CD4-positive, alpha-beta T cell (primary cell): ENCODE measurements at regions of chr18 and their contacts with region 1.

Region 1: DNA sequence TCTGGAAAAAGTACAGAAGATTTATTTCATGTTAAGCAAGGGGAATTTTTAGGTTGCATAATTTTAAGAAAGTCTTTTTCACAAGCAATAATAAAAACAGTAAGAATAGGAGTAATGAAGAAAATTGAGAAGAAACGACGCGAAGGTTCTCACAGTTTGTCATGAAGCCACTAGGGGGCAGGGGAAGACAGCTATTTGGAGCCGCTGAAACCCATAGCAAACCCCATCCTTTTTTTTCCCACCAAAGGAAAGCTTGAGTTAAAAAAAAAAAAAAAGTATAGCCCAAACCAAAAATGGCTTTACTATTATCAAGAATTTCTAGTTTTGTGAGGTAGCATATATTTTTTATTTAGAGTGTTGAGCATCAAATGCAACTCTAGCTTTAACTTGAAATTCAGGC is 300.9 kb downstream of the PHLPP1 start:
- DNase-seq: peak in 13 of 14 experiments; percentile 10 to 81 (median 33)
- ATAC-seq: peak; percentile 71
- H3K4me3 ChIP-seq: no peak overlapping the region
- H3K4me3 Mint-ChIP-seq: no peak overlapping the region
- H3K27ac ChIP-seq: no peak overlapping the region
- H3K27ac Mint-ChIP-seq: no peak overlapping the region
- H3K4me1 ChIP-seq: no peaks in the 10 kb centered on the region
- H3K4me1 Mint-ChIP-seq: no peaks in the 10 kb centered on the region
- H3K27me3 ChIP-seq: no peaks in the 10 kb centered on the region
- H3K27me3 Mint-ChIP-seq: peaks cover 9% of the 10 kb centered on the region
- CTCF ChIP-seq: peak; percentile 81

Region 2: GRCh38 chr18:63040788-63041410 is 24.6 kb after region 1 on chr18:
- CTCF ChIA-PET with region 1: no interaction called
- POLR2A ChIA-PET with region 1: no interaction called
- intact Hi-C with region 1: no loop called
- DNase-seq: peak in 2 of 14 experiments; percentile 51 to 59
- ATAC-seq: no peak
- H3K4me3 ChIP-seq: no peak overlapping the region
- H3K4me3 Mint-ChIP-seq: no peak overlapping the region
- H3K27ac ChIP-seq: no peak overlapping the region
- H3K27ac Mint-ChIP-seq: no peak overlapping the region
- H3K4me1 ChIP-seq: peaks cover 9% of the 10 kb centered on the region
- H3K4me1 Mint-ChIP-seq: peaks cover 9% of the 10 kb centered on the region
- H3K27me3 ChIP-seq: peaks cover 0 to 6% of the 10 kb centered on the region in 2 experiments
- H3K27me3 Mint-ChIP-seq: peaks cover 6% of the 10 kb centered on the region
- CTCF ChIP-seq: no peak

Region 3: GRCh38 chr18:63339920-63340484 is 323.7 kb after region 1 on chr18:
- CTCF ChIA-PET with region 1: interaction called, 8 read pairs
- POLR2A ChIA-PET with region 1: interaction called, 3 read pairs
- intact Hi-C with region 1: loop called (anchors 1 to 5 kb)
- DNase-seq: peak in 13 of 14 experiments; percentile 9 to 75 (median 32)
- ATAC-seq: peak; percentile 51
- H3K4me3 ChIP-seq: no peak overlapping the region
- H3K4me3 Mint-ChIP-seq: no peak overlapping the region
- H3K27ac ChIP-seq: no peak overlapping the region
- H3K27ac Mint-ChIP-seq: no peak overlapping the region
- H3K4me1 ChIP-seq: no peaks in the 10 kb centered on the region
- H3K4me1 Mint-ChIP-seq: no peaks in the 10 kb centered on the region
- H3K27me3 ChIP-seq: no peaks in the 10 kb centered on the region
- H3K27me3 Mint-ChIP-seq: no peaks in the 10 kb centered on the region
- CTCF ChIP-seq: peak; percentile 65

Region 4: DNA sequence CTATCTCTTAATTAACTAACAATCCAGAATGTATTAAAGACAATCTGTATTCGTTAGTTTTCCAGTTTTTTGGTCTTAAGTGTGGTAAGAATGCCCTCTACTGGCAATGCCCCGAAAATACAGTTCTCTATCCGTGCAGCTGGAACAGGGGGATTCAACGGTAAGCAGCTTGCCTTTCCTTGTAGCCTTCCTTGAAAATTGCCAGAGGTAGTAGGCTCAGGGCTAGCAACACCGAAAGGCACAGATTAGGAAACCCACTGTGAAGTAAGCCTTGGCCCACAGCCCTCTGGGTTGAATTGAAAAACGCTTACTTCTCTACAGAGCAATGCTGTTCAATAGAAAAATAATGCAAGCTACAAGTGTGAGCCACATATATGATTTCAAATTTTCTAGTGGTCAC is 423.1 kb after region 1 on chr18:
- CTCF ChIA-PET with region 1: interaction called, 28 read pairs
- POLR2A ChIA-PET with region 1: interaction called, 4 read pairs
- intact Hi-C with region 1: loop called (anchors 1 kb)
- DNase-seq: peak; percentile 7 to 79 (median 32)
- ATAC-seq: peak; percentile 79
- H3K4me3 ChIP-seq: no peak overlapping the region
- H3K4me3 Mint-ChIP-seq: no peak overlapping the region
- H3K27ac ChIP-seq: no peak overlapping the region
- H3K27ac Mint-ChIP-seq: no peak overlapping the region
- H3K4me1 ChIP-seq: no peaks in the 10 kb centered on the region
- H3K4me1 Mint-ChIP-seq: no peaks in the 10 kb centered on the region
- H3K27me3 ChIP-seq: no peaks in the 10 kb centered on the region
- H3K27me3 Mint-ChIP-seq: peaks cover 21% of the 10 kb centered on the region
- CTCF ChIP-seq: peak; percentile 95

Region 5: DNA sequence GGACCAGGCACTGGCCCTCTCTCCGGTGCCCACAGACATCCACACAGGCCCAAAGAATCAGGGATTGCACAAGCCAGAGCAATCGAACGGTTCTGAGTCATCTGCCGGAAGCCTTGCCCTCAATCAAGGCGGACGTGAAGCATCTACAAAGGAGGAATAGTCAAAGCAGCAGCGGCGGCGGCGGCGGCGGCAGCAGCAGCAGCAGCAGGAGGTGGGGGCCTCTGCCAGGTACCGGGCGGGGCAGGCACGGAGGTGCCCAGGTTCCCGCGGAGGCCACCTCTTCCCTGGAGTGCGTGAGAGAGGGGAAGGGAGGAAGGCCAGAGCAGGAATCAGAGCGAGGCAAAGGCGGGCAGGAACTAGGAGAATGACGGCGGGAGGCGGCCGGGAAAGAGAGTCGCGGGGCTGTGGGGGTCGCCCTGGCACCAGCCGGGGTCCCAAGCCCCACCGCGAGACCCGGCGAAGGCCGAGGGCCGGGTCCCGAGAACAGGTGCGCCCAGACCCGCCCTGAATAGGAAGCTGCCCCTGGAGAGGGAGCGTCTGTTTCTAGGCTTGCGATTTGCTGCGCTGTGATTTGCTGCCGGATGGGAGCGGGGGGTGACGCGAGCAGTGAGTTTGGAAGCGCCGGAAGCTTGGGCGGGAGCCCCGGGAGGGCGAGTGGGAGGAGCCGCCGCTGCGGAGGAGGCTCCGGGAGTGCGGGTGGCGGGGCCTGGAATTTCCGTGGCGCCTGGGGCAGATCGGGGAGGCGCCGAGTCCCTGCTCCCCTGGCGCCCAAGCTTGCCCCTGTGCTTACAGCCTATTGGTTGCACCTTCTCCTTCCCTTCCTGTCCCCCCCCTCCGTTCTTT is 953.9 kb after region 1 on chr18 and contains the start of gene SERPINB8:
- CTCF ChIA-PET with region 1: no interaction called
- POLR2A ChIA-PET with region 1: no interaction called
- intact Hi-C with region 1: loop called in 1 of 2 experiments (anchors 10 kb)
- DNase-seq: peak; percentile 65 to 89 (median 76)
- ATAC-seq: peak; percentile 90
- H3K4me3 ChIP-seq: peak within 1 kb of the TSS; percentile 77
- H3K4me3 Mint-ChIP-seq: peak within 1 kb of the TSS; percentile 99
- H3K27ac ChIP-seq: peak within 1 kb of the TSS; percentile 84 to 93
- H3K27ac Mint-ChIP-seq: peak within 1 kb of the TSS; percentile 99
- H3K4me1 ChIP-seq: peaks cover 21% of the 10 kb centered on the region
- H3K4me1 Mint-ChIP-seq: peaks cover 27% of the 10 kb centered on the region
- H3K27me3 ChIP-seq: no peaks in the 10 kb centered on the region
- H3K27me3 Mint-ChIP-seq: peaks cover 4% of the 10 kb centered on the region
- CTCF ChIP-seq: peak; percentile 2
- total RNA-seq, gene SERPINB8: 9.8 to 11.0 TPM